MCF 10A (cell line): ENCODE measurements at regions of chr5 and their contacts with region 1.

Region 1: GRCh38 chr5:78886341-78887230 is 98.5 kb downstream of the ARSB start:
- DNase-seq: peak; percentile 34
- H3K4me3 Mint-ChIP-seq: no peak overlapping the region
- H3K27ac Mint-ChIP-seq: no peak overlapping the region
- H3K4me1 Mint-ChIP-seq: no peaks in the 10 kb centered on the region
- H3K27me3 Mint-ChIP-seq: no peaks in the 10 kb centered on the region
- CTCF ChIP-seq: peak; percentile 53

Region 2: DNA sequence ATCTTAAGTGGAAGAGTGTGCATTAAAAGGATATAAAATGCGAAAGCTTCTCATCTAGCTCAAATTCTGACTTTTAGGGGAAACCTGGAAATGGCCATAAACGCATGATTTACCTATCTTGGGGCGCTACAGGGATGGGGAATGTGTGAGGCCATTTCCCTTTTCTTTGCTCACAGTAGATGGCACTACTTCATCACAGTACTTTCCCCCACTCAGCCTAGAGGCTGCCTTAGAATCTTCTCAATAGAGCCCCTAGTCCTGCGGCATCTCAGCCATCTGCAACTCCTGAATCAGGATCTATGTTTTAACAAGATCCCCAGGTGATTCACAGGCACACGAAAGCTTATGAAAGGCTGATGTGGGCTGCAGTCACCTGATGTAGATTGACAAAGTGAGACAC is 348.8 kb before region 1 on chr5:
- CTCF ChIA-PET with region 1: interaction called, 5 read pairs
- POLR2A ChIA-PET with region 1: no interaction called
- intact Hi-C with region 1: loop called (anchors 5 kb)
- DNase-seq: peak; percentile 45
- H3K4me3 Mint-ChIP-seq: no peak overlapping the region
- H3K27ac Mint-ChIP-seq: no peak overlapping the region
- H3K4me1 Mint-ChIP-seq: peaks cover 12% of the 10 kb centered on the region
- H3K27me3 Mint-ChIP-seq: no peaks in the 10 kb centered on the region
- CTCF ChIP-seq: peak; percentile 27

Region 3: DNA sequence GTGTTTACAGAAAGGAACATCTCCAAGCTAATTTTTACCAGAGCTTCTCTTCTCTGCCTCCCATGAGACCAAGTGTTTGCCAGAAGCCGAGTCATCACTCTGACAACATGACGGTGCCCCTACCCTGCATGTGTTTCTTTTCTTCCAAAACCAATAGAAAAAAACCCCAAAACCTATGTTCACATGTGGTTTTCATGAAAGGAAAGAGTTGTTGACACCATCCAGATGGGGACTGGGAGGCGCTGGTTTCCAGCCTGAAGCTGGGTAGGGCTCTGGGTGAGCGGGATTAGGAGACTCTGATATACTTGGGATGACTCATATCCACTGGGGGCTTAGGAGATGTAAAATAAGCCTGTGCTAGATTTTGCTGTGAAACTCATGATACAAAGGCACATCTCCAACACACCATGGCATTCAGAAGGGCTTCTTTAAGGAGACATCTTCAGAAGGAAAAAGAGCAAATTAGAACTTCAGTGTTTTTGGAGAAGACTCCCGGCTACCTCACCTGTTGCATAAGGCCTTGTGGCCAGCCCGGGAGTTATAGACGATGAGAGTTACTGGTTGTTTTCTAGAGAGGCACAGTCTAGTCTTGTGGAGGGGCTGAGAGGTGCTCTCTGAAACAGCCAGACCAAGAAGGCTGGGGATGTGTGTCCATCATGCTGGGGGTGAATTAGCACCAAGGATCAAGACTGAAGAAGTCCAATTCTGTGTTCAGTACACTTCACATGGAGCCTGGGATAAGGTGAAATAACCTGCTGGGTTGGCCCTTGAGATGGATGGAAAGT is 129.1 kb before region 1 on chr5:
- CTCF ChIA-PET with region 1: no interaction called
- POLR2A ChIA-PET with region 1: no interaction called
- intact Hi-C with region 1: no loop called
- DNase-seq: peak; percentile 53
- H3K4me3 Mint-ChIP-seq: no peak overlapping the region
- H3K27ac Mint-ChIP-seq: no peak overlapping the region
- H3K4me1 Mint-ChIP-seq: peaks cover 9% of the 10 kb centered on the region
- H3K27me3 Mint-ChIP-seq: no peaks in the 10 kb centered on the region
- CTCF ChIP-seq: no peak

Region 4: GRCh38 chr5:78908173-78909061 is 21.8 kb after region 1 on chr5:
- CTCF ChIA-PET with region 1: no interaction called
- POLR2A ChIA-PET with region 1: no interaction called
- intact Hi-C with region 1: no loop called
- DNase-seq: no peak
- H3K4me3 Mint-ChIP-seq: no peak overlapping the region
- H3K27ac Mint-ChIP-seq: no peak overlapping the region
- H3K4me1 Mint-ChIP-seq: no peaks in the 10 kb centered on the region
- H3K27me3 Mint-ChIP-seq: no peaks in the 10 kb centered on the region
- CTCF ChIP-seq: no peak